PC-9 (cell line): ENCODE measurements at regions of chr19 and their contacts with region 1.

Region 1: GRCh38 chr19:38634757-38635482 is 12.5 kb upstream of the ACTN4 start:
- DNase-seq: peak; percentile 46 to 77
- H3K4me3 ChIP-seq: no peak overlapping the region
- H3K27ac ChIP-seq: no peak overlapping the region
- H3K4me1 ChIP-seq: peaks cover 36% of the 10 kb centered on the region
- H3K27me3 ChIP-seq: no peaks in the 10 kb centered on the region
- CTCF ChIP-seq: peak; percentile 95

Region 2: DNA sequence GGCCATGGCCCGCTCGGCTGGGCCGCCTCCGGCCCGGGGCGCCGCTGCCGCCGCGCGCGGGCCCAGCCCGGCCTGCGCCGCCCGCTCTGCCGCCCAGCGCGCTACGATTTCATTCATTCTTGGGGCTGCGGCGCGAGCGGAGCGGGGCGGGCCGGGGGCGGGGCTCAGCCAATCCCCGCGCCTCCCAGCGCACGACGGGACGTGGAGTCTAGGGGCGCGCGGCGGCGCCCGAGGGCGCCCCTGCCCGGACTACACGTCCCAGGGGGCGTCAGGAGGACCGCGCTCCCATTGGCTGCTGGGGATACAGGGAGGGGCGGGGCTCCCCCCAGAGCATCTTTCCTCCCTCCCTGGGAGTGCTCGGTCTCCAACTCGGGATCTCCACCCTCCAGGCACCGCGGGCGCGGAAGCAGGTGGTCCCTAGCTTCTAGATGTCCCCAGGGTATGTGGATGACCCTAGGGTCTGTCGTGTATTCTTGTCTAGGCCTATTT is 405.3 kb before region 1 on chr19:
- CTCF ChIA-PET with region 1: interaction called, 4 read pairs
- POLR2A ChIA-PET with region 1: no interaction called
- intact Hi-C with region 1: loop called (anchors 10 kb)
- DNase-seq: peak in 1 of 2 experiments; percentile 56
- H3K4me3 ChIP-seq: no peak overlapping the region
- H3K27ac ChIP-seq: no peak overlapping the region
- H3K4me1 ChIP-seq: 0 out of 2 replicates have a peak, but pooled peaks cover 6% of the 10 kb centered on the region
- H3K27me3 ChIP-seq: peaks cover 14% of the 10 kb centered on the region; the same call in 1 of the 2 replicates
- CTCF ChIP-seq: no peak

Region 3: GRCh38 chr19:38559428-38560401 is 75.2 kb before region 1 on chr19:
- CTCF ChIA-PET with region 1: interaction called, 3 read pairs
- POLR2A ChIA-PET with region 1: no interaction called
- intact Hi-C with region 1: loop called (anchors 5 kb)
- DNase-seq: no peak
- H3K4me3 ChIP-seq: no peak overlapping the region
- H3K27ac ChIP-seq: no peak overlapping the region
- H3K4me1 ChIP-seq: peaks cover 7% of the 10 kb centered on the region; the same call in 1 of the 2 replicates
- H3K27me3 ChIP-seq: no peaks in the 10 kb centered on the region; the same call in 1 of the 2 replicates
- CTCF ChIP-seq: no peak

Region 4: GRCh38 chr19:38683393-38684080 is 48.6 kb after region 1 on chr19:
- CTCF ChIA-PET with region 1: no interaction called
- POLR2A ChIA-PET with region 1: interaction called, 17 read pairs
- intact Hi-C with region 1: loop called (anchors 1 kb)
- DNase-seq: peak; percentile 97 to 100
- H3K4me3 ChIP-seq: peak overlapping the region; percentile 36; the same call in 1 of the 2 replicates
- H3K27ac ChIP-seq: peak overlapping the region; percentile 100
- H3K4me1 ChIP-seq: peaks cover 95% of the 10 kb centered on the region
- H3K27me3 ChIP-seq: no peaks in the 10 kb centered on the region
- CTCF ChIP-seq: no peak

Region 5: GRCh38 chr19:38736413-38737280 is 101.7 kb after region 1 on chr19:
- CTCF ChIA-PET with region 1: interaction called, 3 read pairs
- POLR2A ChIA-PET with region 1: interaction called, 5 read pairs
- intact Hi-C with region 1: loop called (anchors 2 kb)
- DNase-seq: peak in 1 of 2 experiments; percentile 47
- H3K4me3 ChIP-seq: peak overlapping the region; percentile 49; the same call in 1 of the 2 replicates
- H3K27ac ChIP-seq: peak overlapping the region; percentile 41; the same call in 1 of the 2 replicates
- H3K4me1 ChIP-seq: peaks cover 30% of the 10 kb centered on the region
- H3K27me3 ChIP-seq: no peaks in the 10 kb centered on the region
- CTCF ChIP-seq: no peak

Region 6: DNA sequence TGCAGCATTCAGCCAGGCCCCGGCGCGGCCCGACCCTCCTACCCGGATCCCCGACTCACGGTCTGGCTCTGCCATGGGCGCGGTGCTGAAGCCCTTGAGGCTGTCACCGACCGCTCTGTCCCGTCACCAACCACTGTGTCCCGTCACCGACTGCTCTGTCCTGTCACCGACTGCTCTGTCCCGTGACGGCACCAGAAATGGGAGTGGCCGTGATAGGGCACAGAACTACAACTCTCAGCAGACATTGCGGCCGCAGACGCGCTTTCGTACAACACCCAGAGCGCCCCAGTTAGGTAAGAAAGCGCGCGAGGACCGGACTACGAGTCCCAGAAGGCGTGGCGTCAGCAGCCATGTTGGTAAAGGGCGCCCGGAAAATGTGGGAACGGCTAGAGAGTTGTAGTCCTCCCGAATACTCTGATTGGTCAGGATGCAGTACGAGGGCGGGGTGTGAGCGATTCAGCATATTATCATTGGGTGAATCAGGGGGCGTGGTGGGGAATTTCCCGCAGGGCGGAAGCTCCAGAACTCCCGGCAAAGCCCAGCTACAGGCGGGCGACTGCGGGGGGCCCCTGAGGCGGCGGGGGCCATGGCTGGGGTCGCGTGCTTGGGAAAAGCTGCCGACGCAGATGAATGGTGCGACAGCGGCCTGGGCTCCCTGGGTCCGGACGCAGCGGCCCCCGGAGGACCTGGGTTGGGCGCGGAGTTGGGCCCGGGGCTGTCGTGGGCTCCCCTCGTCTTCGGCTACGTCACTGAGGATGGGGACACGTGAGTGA is 264.7 kb after region 1 on chr19 and contains the starts of genes NFKBIB and SIRT2:
- CTCF ChIA-PET with region 1: no interaction called
- POLR2A ChIA-PET with region 1: interaction called, 4 read pairs
- intact Hi-C with region 1: loop called (anchors 1 kb)
- DNase-seq: peak; percentile 99
- H3K4me3 ChIP-seq: peak within 1 kb of the TSS; percentile 73
- H3K27ac ChIP-seq: peak within 1 kb of the TSS; percentile 64
- H3K4me1 ChIP-seq: peaks cover 16% of the 10 kb centered on the region
- H3K27me3 ChIP-seq: no peaks in the 10 kb centered on the region
- CTCF ChIP-seq: no peak
- total RNA-seq, gene NFKBIB: 18.8 and 21.6 TPM in 2 replicates
- total RNA-seq, gene SIRT2: 29.6 and 32.9 TPM in 2 replicates